ENCODE measurements at regions of chr10 and their contacts with region 1.

Region 1: DNA sequence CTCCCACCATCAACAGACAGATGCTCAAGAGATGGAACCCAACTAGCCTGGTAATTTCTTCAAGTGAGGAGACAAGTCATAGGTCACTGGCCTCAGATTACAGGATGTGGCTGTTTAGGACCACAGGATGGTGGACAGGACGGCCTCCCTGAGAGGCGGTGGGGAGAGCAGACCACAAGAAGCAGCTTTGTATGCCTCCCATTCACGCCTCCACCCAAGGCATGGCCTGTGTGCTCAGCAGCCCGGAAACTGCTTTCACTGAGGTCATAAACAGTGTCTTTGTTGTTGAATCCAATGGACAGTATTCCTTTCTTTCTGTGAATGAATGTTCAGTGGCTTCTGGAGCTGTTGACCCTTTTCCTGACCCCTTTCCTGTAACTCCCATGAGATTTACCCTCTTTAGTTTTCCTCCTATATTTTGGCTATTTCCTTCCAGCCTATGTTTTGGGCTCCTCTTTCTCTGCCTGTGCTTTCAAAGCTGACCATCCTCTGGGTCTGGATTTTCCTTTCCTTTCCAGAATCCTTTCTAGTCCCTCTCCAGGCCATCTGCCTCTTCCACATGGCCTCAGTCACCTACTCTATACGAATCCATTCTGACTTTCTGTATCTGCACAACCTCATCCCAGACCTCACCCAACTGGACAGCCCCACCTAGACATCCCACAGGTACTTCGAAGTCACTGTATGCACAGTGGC is 32.4 kb upstream of the INPP5F start:
- DNase-seq: peak in 31 of 42 donors; percentile 20 to 80 (median 53)

Region 2: DNA sequence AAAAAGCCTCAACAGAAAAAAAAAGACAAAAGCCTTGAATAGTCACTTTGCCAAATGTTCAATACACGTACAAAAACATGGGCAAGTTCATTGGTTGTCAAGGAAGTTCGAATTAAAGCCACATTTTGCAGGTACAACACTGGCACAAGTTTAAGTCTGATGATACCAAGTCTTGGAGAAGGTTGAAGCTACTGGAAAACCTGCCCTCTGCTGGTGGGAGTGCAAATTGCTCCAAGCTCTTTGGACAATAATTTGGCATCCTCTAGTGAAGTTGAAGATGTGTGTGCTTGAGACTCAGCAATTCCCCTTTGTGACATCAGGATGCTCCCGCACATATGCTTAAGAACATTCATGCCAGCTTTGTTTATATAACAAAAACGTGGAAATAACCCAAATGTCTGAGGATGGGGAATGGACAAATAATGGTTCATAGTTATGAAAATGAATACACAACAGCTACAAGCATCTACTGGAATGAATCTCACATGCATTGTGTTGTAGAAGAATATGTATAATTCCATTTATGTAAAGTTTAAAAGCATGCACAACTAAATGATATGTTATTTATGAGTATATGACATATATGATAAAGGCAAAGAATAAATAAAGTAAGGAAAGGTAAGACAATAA is 643.6 kb after region 1 on chr10:
- intact Hi-C with region 1: loop called (anchors 10 kb)
- DNase-seq: peak in 37 of 42 donors; percentile 2 to 74 (median 36)

Measured in head of caudate nucleus (tissue), 42 donors.